Activated naive CD4-positive, alpha-beta T cell treated with anti-CD3 and anti-CD28 coated beads, Interleukin-2, amount 10 ng/mL, durations not matched to agents 7 days and 5 days (primary cell): ENCODE measurements at regions of chr10 and their contacts with region 1.

Region 1: DNA sequence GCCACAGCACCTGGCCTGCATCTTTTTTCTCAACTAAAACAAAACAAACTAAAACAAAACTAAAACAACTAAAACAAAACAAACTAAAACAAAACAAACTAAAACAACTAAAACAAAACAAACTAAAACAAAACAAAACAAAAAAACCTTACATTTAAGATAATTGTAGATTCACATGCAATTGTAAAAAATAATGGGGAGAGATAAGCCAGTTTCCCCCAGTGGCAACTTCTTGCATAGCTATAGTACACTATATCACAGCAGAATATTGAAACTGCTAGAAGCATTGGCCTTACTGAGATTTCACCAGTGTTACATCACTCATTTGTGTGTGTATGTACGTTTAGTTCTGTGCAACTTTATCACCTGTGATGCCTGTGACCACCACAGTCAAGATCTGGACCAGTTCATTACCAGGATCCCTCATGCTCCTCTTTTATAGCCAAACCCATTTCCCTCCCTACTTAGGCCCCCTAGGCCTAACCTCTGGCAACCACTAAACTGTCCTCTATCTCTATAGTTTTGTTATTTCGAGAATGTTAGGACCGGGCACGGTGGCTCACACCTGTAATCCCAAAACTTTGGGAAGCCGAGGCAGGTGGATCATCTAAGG is 9.3 kb downstream of the FXYD4 start:
- DNase-seq: no peak
- H3K4me3 Mint-ChIP-seq: no peak overlapping the region
- H3K27ac Mint-ChIP-seq: no peak overlapping the region
- H3K4me1 Mint-ChIP-seq: peaks cover 6% of the 10 kb centered on the region
- H3K27me3 Mint-ChIP-seq: peaks cover 23% of the 10 kb centered on the region

Region 2: GRCh38 chr10:43390759-43391158 is 10.0 kb after region 1 on chr10:
- CTCF ChIA-PET with region 1: interaction called, 13 read pairs
- DNase-seq: peak; percentile 40
- H3K4me3 Mint-ChIP-seq: no peak overlapping the region
- H3K27ac Mint-ChIP-seq: peak overlapping the region; percentile 20
- H3K4me1 Mint-ChIP-seq: peaks cover 90% of the 10 kb centered on the region
- H3K27me3 Mint-ChIP-seq: no peaks in the 10 kb centered on the region

Region 3: DNA sequence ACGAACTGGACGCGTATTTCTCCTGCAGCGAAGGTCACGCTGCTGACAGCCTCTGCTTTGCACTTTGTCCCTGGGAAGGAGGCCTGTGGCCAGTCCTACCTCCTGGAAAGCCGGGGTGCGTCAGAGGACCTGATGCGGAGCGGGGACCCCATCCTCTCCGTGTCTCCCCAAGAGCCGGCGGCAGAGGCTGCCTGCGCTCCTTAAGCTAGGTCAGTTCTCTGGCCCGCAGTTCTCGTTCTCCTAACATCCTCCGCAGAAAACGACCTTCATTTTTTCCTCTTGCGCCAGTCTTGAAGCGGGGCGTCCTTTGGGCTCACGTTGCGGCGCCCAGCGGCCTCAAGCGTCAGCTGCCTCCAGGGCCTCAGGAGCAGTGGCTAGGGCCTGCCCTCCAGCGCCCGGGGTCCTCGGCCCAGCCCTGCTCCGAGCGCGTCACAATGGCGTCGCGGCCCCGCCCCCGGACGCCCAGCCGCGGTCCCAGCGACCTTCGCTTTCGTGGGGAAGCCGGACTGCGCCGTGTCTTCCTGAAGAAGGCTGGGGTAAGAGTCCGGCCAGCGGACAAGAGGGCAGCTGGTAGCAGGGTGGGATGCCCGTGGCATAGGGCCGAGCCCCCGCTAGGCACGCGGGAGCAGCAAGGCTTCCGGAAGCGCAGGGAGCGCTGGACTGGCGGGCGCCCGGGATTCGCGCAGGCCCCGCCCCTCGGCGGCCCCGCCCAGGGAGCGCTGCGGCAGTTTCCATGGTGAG is 55.9 kb after region 1 on chr10 and contains the start of gene ZNF487:
- CTCF ChIA-PET with region 1: no interaction called
- DNase-seq: peak; percentile 91
- H3K4me3 Mint-ChIP-seq: peak within 1 kb of the TSS; percentile 98
- H3K27ac Mint-ChIP-seq: peak within 1 kb of the TSS; percentile 98
- H3K4me1 Mint-ChIP-seq: peaks cover 37% of the 10 kb centered on the region
- H3K27me3 Mint-ChIP-seq: no peaks in the 10 kb centered on the region